CD4-positive, alpha-beta T cell (primary cell): ENCODE measurements at regions of chr19 and their contacts with region 1.

Region 1: GRCh38 chr19:17570791-17571190 is 15.3 kb downstream of the COLGALT1 start:
- DNase-seq: no peak
- ATAC-seq: no peak
- H3K4me3 ChIP-seq: no peak overlapping the region
- H3K4me3 Mint-ChIP-seq: no peak overlapping the region
- H3K27ac ChIP-seq: no peak overlapping the region
- H3K27ac Mint-ChIP-seq: no peak overlapping the region
- H3K4me1 ChIP-seq: peaks cover 7% of the 10 kb centered on the region
- H3K4me1 Mint-ChIP-seq: peaks cover 5% of the 10 kb centered on the region
- H3K27me3 ChIP-seq: no peaks in the 10 kb centered on the region
- H3K27me3 Mint-ChIP-seq: no peaks in the 10 kb centered on the region
- CTCF ChIP-seq: no peak

Region 2: DNA sequence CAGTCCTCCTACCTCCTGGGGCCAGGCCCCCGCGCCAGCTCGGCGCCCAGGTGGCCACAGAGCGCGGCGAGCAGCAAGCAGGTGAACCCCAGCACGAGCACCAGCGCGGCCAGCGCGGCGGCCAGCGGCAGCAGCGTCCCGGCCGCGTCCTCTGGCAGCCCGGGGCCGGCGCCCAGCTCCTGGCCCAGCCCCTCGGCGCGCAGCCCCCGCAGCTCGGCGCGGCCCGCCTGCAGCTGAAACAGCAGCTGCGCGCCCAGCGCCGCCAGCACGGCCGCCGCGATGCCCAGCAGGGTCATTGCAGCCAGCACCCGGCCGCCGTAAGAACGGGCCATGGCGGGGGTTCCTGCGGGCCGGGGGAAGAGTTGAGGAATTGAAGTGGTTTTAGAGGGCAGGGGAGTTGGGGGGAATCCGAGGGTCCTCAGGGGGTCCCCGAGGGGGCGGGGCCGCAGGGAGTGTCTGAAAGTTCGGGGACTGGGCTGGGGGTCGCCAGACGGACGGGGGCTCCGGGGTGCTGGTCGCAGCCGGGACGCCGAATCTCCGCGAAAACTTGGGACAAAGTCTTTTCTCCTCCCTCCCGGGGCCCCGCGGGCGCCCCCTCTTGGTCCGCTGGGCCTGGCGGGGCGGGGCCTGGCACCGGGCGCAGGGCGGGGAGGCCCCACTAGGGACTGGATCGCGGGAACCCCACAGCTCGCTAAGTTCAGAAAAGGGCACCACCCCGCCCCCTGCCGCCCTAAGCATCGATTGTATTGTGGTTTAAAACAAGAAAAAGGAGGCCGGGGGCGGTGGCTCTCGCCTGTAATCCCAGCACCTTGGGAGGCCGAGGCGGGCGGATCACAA is 122.4 kb before region 1 on chr19 and contains the start of gene TMEM221:
- CTCF ChIA-PET with region 1: interaction called, 3 read pairs
- POLR2A ChIA-PET with region 1: no interaction called
- intact Hi-C with region 1: loop called (anchors 1 to 5 kb)
- DNase-seq: peak in 13 of 14 experiments; percentile 26 to 82 (median 55)
- ATAC-seq: peak; percentile 88
- H3K4me3 ChIP-seq: peak within 1 kb of the TSS; percentile 31
- H3K4me3 Mint-ChIP-seq: peak within 1 kb of the TSS; percentile 1
- H3K27ac ChIP-seq: no peak within 1 kb of the TSS
- H3K27ac Mint-ChIP-seq: no peak within 1 kb of the TSS
- H3K4me1 ChIP-seq: peaks cover 17% of the 10 kb centered on the region
- H3K4me1 Mint-ChIP-seq: peaks cover 10% of the 10 kb centered on the region
- H3K27me3 ChIP-seq: peaks cover 0 to 6% of the 10 kb centered on the region in 2 experiments
- H3K27me3 Mint-ChIP-seq: peaks cover 37% of the 10 kb centered on the region
- CTCF ChIP-seq: peak; percentile 56
- total RNA-seq, gene TMEM221: not detected

Region 3: DNA sequence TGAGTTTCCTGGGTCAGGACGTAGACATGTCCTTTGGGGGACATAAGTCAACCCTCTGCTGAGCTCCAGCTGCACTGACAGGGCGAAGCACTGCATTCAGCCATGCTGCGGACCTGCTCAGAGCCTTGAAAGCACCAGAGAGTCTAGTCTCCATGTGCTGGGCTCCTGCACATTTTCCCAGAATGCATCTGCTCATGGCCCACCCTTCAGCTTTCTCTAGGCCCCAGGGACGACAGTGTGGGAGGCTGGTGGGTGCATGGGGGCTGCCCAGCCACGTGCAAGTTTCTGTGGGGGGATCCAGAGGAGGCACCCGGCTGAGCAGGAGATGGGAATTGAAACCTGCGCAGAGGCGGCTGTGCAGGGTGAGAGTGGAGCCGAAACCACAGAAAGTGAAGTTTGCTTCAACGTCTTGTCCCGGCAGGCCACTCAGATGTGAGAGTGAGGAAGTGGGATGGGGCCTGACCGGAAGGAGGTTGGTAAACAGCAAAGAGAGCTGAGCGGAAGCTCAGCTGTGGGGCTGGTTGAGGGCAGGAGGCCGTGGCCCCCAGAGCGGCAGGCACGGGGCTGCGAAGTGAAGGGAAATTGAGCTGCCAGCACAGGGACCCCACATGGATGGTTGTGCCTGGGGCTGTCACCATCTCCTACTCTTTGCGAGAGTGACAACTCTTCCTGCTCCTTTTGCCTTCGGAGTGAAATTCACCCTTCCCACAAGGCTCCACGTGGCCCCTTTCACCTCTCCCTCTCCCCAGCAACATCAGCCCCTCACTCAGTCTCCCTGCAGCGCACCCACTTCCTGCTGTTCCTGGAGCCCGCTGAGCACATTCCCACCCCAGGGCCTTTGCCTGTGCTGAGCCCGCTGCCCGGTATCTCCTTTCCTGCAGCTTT is 47.6 kb before region 1 on chr19:
- CTCF ChIA-PET with region 1: no interaction called
- POLR2A ChIA-PET with region 1: no interaction called
- intact Hi-C with region 1: loop called in 1 of 2 experiments (anchors 1 kb)
- DNase-seq: peak in 12 of 14 experiments; percentile 9 to 80 (median 48)
- ATAC-seq: peak; percentile 72
- H3K4me3 ChIP-seq: peak overlapping the region; percentile 19
- H3K4me3 Mint-ChIP-seq: peak overlapping the region; percentile 78
- H3K27ac ChIP-seq: peak overlapping the region in 1 of 2 donors; percentile 46
- H3K27ac Mint-ChIP-seq: peak overlapping the region; percentile 87
- H3K4me1 ChIP-seq: peaks cover 32% of the 10 kb centered on the region
- H3K4me1 Mint-ChIP-seq: peaks cover 27% of the 10 kb centered on the region
- H3K27me3 ChIP-seq: no peaks in the 10 kb centered on the region
- H3K27me3 Mint-ChIP-seq: no peaks in the 10 kb centered on the region
- CTCF ChIP-seq: no peak

Region 4: DNA sequence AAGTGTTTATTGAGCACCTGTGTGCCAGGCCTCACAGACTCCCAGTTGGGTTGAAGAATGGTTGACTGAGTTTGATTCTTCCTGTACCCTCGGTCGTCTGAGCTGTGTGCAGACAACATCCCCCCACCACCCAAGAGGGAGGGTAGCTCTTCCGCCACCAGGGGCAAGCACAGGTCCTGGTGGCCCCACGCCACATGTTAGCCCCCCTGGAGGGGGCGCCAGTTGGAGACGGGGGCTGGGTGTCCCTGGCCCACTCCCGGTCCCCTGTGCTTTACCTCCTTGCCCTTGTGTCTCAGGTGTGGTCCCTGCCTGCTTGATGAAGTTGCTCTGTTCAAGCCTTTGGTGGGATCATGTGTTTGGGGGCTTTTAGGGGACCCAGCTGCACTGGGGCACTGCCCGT is 11.8 kb after region 1 on chr19:
- CTCF ChIA-PET with region 1: no interaction called
- POLR2A ChIA-PET with region 1: no interaction called
- intact Hi-C with region 1: no loop called
- DNase-seq: no peak
- ATAC-seq: no peak
- H3K4me3 ChIP-seq: no peak overlapping the region
- H3K4me3 Mint-ChIP-seq: no peak overlapping the region
- H3K27ac ChIP-seq: no peak overlapping the region
- H3K27ac Mint-ChIP-seq: no peak overlapping the region
- H3K4me1 ChIP-seq: no peaks in the 10 kb centered on the region
- H3K4me1 Mint-ChIP-seq: no peaks in the 10 kb centered on the region
- H3K27me3 ChIP-seq: no peaks in the 10 kb centered on the region
- H3K27me3 Mint-ChIP-seq: no peaks in the 10 kb centered on the region
- CTCF ChIP-seq: no peak